Calu3 (cell line): ENCODE measurements at regions of chr17 and their contacts with region 1.

Region 1: GRCh38 chr17:80101011-80101945 is at the start of gene GAA:
- DNase-seq: peak; percentile 94
- H3K4me3 Mint-ChIP-seq: peak within 1 kb of the TSS; percentile 81
- H3K27ac Mint-ChIP-seq: peak within 1 kb of the TSS; percentile 88
- H3K4me1 Mint-ChIP-seq: peaks cover 13% of the 10 kb centered on the region
- H3K27me3 Mint-ChIP-seq: peaks cover 15% of the 10 kb centered on the region
- CTCF ChIP-seq: peak; percentile 89
- total RNA-seq, gene GAA: 73.1 and 82.4 TPM in 2 replicates

Region 2: GRCh38 chr17:80008383-80008840 is 92.9 kb before region 1 on chr17:
- CTCF ChIA-PET with region 1: interaction called, 11 read pairs
- intact Hi-C with region 1: no loop called
- DNase-seq: peak; percentile 91
- H3K4me3 Mint-ChIP-seq: no peak overlapping the region
- H3K27ac Mint-ChIP-seq: peak overlapping the region; percentile 52
- H3K4me1 Mint-ChIP-seq: peaks cover 9% of the 10 kb centered on the region
- H3K27me3 Mint-ChIP-seq: no peaks in the 10 kb centered on the region
- CTCF ChIP-seq: peak; percentile 96

Region 3: GRCh38 chr17:80053102-80053501 is 48.2 kb before region 1 on chr17:
- CTCF ChIA-PET with region 1: no interaction called
- intact Hi-C with region 1: no loop called
- DNase-seq: no peak
- H3K4me3 Mint-ChIP-seq: no peak overlapping the region
- H3K27ac Mint-ChIP-seq: no peak overlapping the region
- H3K4me1 Mint-ChIP-seq: no peaks in the 10 kb centered on the region
- H3K27me3 Mint-ChIP-seq: no peaks in the 10 kb centered on the region
- CTCF ChIP-seq: no peak

Region 4: GRCh38 chr17:80124351-80124981 is 23.2 kb after region 1 on chr17:
- CTCF ChIA-PET with region 1: interaction called, 10 read pairs
- intact Hi-C with region 1: no loop called
- DNase-seq: peak; percentile 54
- H3K4me3 Mint-ChIP-seq: no peak overlapping the region
- H3K27ac Mint-ChIP-seq: no peak overlapping the region
- H3K4me1 Mint-ChIP-seq: no peaks in the 10 kb centered on the region
- H3K27me3 Mint-ChIP-seq: peaks cover 27% of the 10 kb centered on the region
- CTCF ChIP-seq: peak; percentile 40

Region 5: GRCh38 chr17:80263253-80264204 is 162.3 kb after region 1 on chr17:
- CTCF ChIA-PET with region 1: interaction called, 11 read pairs
- intact Hi-C with region 1: no loop called
- DNase-seq: peak; percentile 90
- H3K4me3 Mint-ChIP-seq: peak overlapping the region; percentile 79
- H3K27ac Mint-ChIP-seq: peak overlapping the region; percentile 88
- H3K4me1 Mint-ChIP-seq: peaks cover 21% of the 10 kb centered on the region
- H3K27me3 Mint-ChIP-seq: no peaks in the 10 kb centered on the region
- CTCF ChIP-seq: no peak